ENCODE measurements at regions of chr9 and their contacts with region 1.

Region 1: GRCh38 chr9:109451311-109452025 is 46.6 kb downstream of the PTPN3 start:
- DNase-seq: no peak
- ATAC-seq: no peak
- H3K4me3 Mint-ChIP-seq: no peak overlapping the region
- H3K27ac Mint-ChIP-seq: no peak overlapping the region
- H3K4me1 Mint-ChIP-seq: peaks cover 18% of the 10 kb centered on the region
- H3K27me3 Mint-ChIP-seq: peaks cover 10% of the 10 kb centered on the region

Region 2: DNA sequence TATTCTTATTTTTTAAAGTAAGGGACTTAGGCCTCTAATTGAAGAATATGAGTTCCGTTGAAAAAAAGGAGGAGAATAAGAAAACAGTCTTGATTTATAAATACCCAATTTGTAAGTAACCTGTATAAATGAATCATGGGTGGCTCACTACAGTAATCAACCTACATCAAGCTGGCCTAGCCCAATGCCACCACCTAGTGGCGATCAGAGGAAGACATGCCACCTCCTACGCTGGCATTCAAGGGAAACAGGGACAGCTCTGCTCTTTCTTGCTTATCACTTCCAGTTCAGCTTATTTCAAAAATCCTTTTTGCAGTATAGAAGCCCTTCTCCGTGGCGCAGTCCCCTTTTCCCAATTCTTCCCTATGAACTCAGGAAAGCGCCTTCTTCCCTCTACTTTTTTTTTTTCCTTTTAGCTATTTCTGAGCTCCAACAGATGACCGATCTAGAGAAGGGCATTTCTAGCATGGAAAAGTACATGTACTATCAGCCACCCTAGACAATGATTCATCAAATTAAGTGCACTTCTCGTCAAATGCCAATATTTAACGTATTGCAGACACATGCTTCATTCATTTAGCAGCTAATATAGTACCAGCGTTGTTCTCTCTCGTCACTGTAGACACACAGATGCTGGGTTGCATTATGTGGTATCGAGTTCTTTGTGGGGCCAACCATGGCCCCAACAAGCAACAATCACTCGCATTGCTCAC is 18.3 kb after region 1 on chr9:
- CTCF ChIA-PET with region 1: interaction called, 14 read pairs
- POLR2A ChIA-PET with region 1: no interaction called
- intact Hi-C with region 1: no loop called
- DNase-seq: peak; percentile 85
- ATAC-seq: peak; percentile 97
- H3K4me3 Mint-ChIP-seq: no peak overlapping the region
- H3K27ac Mint-ChIP-seq: no peak overlapping the region
- H3K4me1 Mint-ChIP-seq: peaks cover 8% of the 10 kb centered on the region
- H3K27me3 Mint-ChIP-seq: peaks cover 11% of the 10 kb centered on the region

Region 3: GRCh38 chr9:109487247-109487646 is 35.8 kb after region 1 on chr9:
- CTCF ChIA-PET with region 1: no interaction called
- POLR2A ChIA-PET with region 1: no interaction called
- intact Hi-C with region 1: no loop called
- DNase-seq: no peak
- ATAC-seq: no peak
- H3K4me3 Mint-ChIP-seq: no peak overlapping the region
- H3K27ac Mint-ChIP-seq: no peak overlapping the region
- H3K4me1 Mint-ChIP-seq: no peaks in the 10 kb centered on the region
- H3K27me3 Mint-ChIP-seq: peaks cover 29% of the 10 kb centered on the region